Ascending aorta (tissue), 2 donors: ENCODE measurements at regions of chr18 and their contacts with region 1.

Region 1: GRCh38 chr18:62186774-62187542 is at the starts of genes PIGN and RELCH:
- DNase-seq: peak; percentile 96 to 99
- H3K4me3 ChIP-seq: peak within 1 kb of the TSS; percentile 79 to 98
- H3K27ac ChIP-seq: peak within 1 kb of the TSS; percentile 75 to 82
- H3K4me1 ChIP-seq: peaks cover 0 to 28% of the 10 kb centered on the region in 2 donors
- H3K27me3 ChIP-seq: no peaks in the 10 kb centered on the region
- CTCF ChIP-seq: no peak
- total RNA-seq, gene PIGN: 12.8 TPM
- total RNA-seq, gene RELCH: 26.4 TPM

Region 2: DNA sequence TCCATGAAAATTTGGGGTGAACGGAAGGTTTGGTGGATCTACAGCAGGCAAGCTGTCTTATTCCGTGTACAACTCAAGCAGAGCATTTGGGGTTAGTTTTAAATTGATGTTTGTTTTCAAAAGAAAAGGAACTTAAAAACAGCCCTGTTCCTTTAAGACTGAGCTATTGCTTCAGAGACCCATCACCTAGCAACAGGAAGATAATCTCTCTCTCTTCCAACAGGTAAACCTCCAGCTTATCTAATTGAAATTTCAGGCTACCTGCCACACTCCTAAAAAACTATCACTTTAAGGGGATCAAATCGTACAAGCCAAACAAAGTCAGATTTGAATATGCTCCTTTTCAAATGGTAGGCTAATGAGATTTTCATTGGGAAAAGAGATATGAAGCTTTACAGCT is 395.9 kb before region 1 on chr18:
- intact Hi-C with region 1: no loop called
- DNase-seq: no peak
- H3K4me3 ChIP-seq: no peak overlapping the region
- H3K27ac ChIP-seq: no peak overlapping the region
- H3K4me1 ChIP-seq: no peaks in the 10 kb centered on the region
- H3K27me3 ChIP-seq: no peaks in the 10 kb centered on the region
- CTCF ChIP-seq: no peak

Region 3: DNA sequence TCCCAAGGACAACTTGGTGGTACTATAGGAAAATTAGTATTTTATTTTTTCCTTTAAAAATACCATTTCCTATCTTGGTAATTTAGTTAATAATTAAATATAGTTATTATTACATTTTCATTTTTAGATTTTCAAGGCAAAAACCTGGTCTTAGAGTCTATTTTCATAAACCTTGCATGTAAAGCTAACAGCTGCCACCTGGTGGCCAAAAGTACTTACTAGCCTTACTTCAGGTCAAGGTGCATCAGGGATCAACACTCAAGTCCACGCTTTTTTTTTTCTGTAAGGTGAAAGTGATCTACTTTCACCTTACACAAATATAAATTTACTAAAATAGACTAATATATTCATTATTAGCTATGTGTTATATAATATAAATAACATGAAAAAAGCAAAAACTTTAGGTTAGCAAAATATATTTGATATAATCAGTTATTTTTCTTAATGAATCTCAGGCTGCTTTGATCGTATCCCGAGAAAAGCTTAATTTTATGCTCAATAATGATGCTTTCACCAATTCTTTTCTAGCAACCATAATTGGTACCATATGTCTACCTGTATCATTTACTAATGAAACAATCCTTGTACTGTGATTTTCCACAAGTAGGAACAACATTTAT is 62.6 kb after region 1 on chr18:
- intact Hi-C with region 1: loop called (anchors 1 kb)
- DNase-seq: peak; percentile 10 to 89
- H3K4me3 ChIP-seq: no peak overlapping the region
- H3K27ac ChIP-seq: no peak overlapping the region
- H3K4me1 ChIP-seq: peaks cover 0 to 10% of the 10 kb centered on the region in 2 donors
- H3K27me3 ChIP-seq: no peaks in the 10 kb centered on the region
- CTCF ChIP-seq: peak; percentile 43 to 77 (median 64)

Region 4: GRCh38 chr18:62982600-62983251 is 795.8 kb after region 1 on chr18:
- intact Hi-C with region 1: loop called (anchors 10 kb)
- DNase-seq: no peak
- H3K4me3 ChIP-seq: peak overlapping the region in 1 of 2 donors; percentile 57
- H3K27ac ChIP-seq: no peak overlapping the region
- H3K4me1 ChIP-seq: no peaks in the 10 kb centered on the region
- H3K27me3 ChIP-seq: no peaks in the 10 kb centered on the region
- CTCF ChIP-seq: peak; percentile 65 to 78 (median 68)